CD4-positive, alpha-beta memory T cell (primary cell): ENCODE measurements at regions of chr17 and their contacts with region 1.

Region 1: DNA sequence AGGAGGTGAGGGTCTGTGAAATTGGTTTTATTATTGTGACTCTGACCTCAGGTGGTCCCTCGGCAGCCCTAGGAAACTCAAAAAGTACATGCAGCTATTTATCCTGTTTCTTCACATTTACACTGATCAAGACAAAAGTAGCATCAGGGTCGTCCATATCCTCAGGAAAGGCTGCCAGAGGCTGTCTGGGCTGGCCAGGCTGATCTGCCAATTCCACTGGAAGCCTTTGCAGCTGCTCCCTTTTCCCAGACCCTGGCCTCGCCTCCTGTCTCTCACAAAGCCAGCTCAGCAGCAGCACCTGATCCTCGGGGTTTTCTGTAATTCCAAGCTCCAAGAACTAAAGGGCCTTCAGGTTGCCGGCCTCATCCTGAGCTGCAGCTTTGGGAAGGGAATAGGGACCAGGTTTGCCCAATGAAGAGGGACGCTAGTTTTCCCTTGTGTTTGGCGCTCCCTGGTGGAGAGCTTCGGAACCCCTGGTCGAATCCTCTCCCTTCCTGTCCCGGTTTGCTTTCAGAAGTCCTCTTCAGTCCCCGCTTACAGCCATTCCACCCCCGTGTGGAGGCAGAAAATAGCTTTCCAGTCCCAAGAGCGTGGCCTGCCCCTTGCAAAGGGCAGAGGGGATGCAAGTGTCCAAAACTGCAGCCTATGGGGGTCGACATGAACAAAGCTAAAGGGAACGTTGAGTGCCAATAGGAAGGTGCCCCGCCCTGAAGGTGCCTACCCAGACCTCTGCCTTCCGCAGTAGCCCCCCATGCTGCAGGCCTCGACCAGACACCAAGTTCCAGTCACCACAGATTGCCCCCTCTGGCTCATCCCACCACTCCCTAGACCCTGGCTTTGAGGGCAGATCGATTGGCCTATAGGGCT is 13.4 kb downstream of the MFSD6L start:
- DNase-seq: peak; percentile 31 to 50 (median 39)
- H3K4me3 ChIP-seq: no peak overlapping the region
- H3K4me3 Mint-ChIP-seq: no peak overlapping the region
- H3K27ac ChIP-seq: no peak overlapping the region
- H3K27ac Mint-ChIP-seq: peak overlapping the region in 1 of 7 donors; percentile 15
- H3K4me1 ChIP-seq: peaks cover 5% of the 10 kb centered on the region
- H3K4me1 Mint-ChIP-seq: peaks cover 1 to 4% (median 3%) of the 10 kb centered on the region in 4 donors
- H3K27me3 ChIP-seq: no peaks in the 10 kb centered on the region
- H3K27me3 Mint-ChIP-seq: peaks cover 2 to 3% of the 10 kb centered on the region in 2 donors

Region 2: GRCh38 chr17:8409966-8410864 is 375.6 kb before region 1 on chr17:
- CTCF ChIA-PET with region 1: interaction called, 15 read pairs
- POLR2A ChIA-PET with region 1: no interaction called
- intact Hi-C with region 1: loop called (anchors 2 kb)
- DNase-seq: peak; percentile 69 to 73 (median 71)
- H3K4me3 ChIP-seq: no peak overlapping the region
- H3K4me3 Mint-ChIP-seq: peak overlapping the region in 2 of 8 donors; percentile 3 to 57
- H3K27ac ChIP-seq: no peak overlapping the region
- H3K27ac Mint-ChIP-seq: peak overlapping the region in 1 of 7 donors; percentile 57
- H3K4me1 ChIP-seq: peaks cover 20% of the 10 kb centered on the region
- H3K4me1 Mint-ChIP-seq: peaks cover 11 to 22% (median 15%) of the 10 kb centered on the region in 4 donors
- H3K27me3 ChIP-seq: no peaks in the 10 kb centered on the region
- H3K27me3 Mint-ChIP-seq: peaks cover 7 to 8% of the 10 kb centered on the region in 2 donors

Region 3: GRCh38 chr17:8798846-8799569 is 13.2 kb after region 1 on chr17 and contains the start of gene MFSD6L:
- CTCF ChIA-PET with region 1: interaction called, 11 read pairs
- POLR2A ChIA-PET with region 1: no interaction called
- intact Hi-C with region 1: no loop called
- DNase-seq: no peak
- H3K4me3 ChIP-seq: no peak within 1 kb of the TSS
- H3K4me3 Mint-ChIP-seq: no peak within 1 kb of the TSS
- H3K27ac ChIP-seq: no peak within 1 kb of the TSS
- H3K27ac Mint-ChIP-seq: no peak within 1 kb of the TSS
- H3K4me1 ChIP-seq: no peaks in the 10 kb centered on the region
- H3K4me1 Mint-ChIP-seq: no peaks in the 10 kb centered on the region
- H3K27me3 ChIP-seq: no peaks in the 10 kb centered on the region
- H3K27me3 Mint-ChIP-seq: peaks cover 0 to 3% of the 10 kb centered on the region in 2 donors
- total RNA-seq, gene MFSD6L: not detected

Region 4: DNA sequence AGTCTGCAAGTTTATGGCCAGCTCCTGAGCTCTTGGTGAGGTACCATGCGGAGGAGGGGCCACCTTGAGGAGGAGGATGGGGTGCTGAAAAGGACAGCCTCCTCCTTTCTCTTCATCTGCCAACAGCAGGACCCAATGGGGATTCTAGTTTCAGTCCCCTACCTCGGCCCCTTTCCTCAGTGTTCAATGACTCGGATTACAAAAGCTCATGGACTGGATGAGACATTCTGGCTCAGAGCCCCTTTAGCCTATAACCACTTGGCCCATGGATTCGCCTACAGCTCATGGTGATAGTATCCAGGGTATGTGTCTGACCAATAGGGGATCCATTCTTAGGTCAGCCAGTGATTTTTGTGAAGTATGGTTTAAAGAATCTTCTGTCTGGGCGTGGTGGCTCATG is 90.2 kb after region 1 on chr17:
- CTCF ChIA-PET with region 1: no interaction called
- POLR2A ChIA-PET with region 1: no interaction called
- intact Hi-C with region 1: no loop called
- DNase-seq: no peak
- H3K4me3 ChIP-seq: no peak overlapping the region
- H3K4me3 Mint-ChIP-seq: no peak overlapping the region
- H3K27ac ChIP-seq: no peak overlapping the region
- H3K27ac Mint-ChIP-seq: peak overlapping the region in 2 of 7 donors; percentile 35 to 47
- H3K4me1 ChIP-seq: no peaks in the 10 kb centered on the region
- H3K4me1 Mint-ChIP-seq: peaks cover 0 to 11% (median 7%) of the 10 kb centered on the region in 4 donors
- H3K27me3 ChIP-seq: no peaks in the 10 kb centered on the region
- H3K27me3 Mint-ChIP-seq: no peaks in the 10 kb centered on the region

Region 5: GRCh38 chr17:8894673-8895578 is 109.1 kb after region 1 on chr17:
- CTCF ChIA-PET with region 1: interaction called, 20 read pairs
- POLR2A ChIA-PET with region 1: no interaction called
- intact Hi-C with region 1: no loop called
- DNase-seq: peak in 4 of 5 donors; percentile 45 to 46 (median 46)
- H3K4me3 ChIP-seq: no peak overlapping the region
- H3K4me3 Mint-ChIP-seq: peak overlapping the region in 7 of 8 donors; percentile 12 to 44 (median 33)
- H3K27ac ChIP-seq: no peak overlapping the region
- H3K27ac Mint-ChIP-seq: peak overlapping the region; percentile 56 to 98 (median 92)
- H3K4me1 ChIP-seq: peaks cover 61% of the 10 kb centered on the region
- H3K4me1 Mint-ChIP-seq: peaks cover 51 to 68% (median 58%) of the 10 kb centered on the region in 4 donors
- H3K27me3 ChIP-seq: no peaks in the 10 kb centered on the region
- H3K27me3 Mint-ChIP-seq: no peaks in the 10 kb centered on the region